Mammary epithelial cell (primary cell): ENCODE measurements at regions of chr5 and their contacts with region 1.

Region 1: GRCh38 chr5:132490486-132491367 is at the start of gene IRF1:
- DNase-seq: peak; percentile 98
- H3K4me3 ChIP-seq: peak within 1 kb of the TSS; percentile 81 to 96 (median 86)
- H3K27ac ChIP-seq: peak within 1 kb of the TSS; percentile 86
- H3K4me1 ChIP-seq: peaks cover 28% of the 10 kb centered on the region
- H3K27me3 ChIP-seq: no peaks in the 10 kb centered on the region
- CTCF ChIP-seq: peak in 1 of 2 donors; percentile 20
- total RNA-seq, gene IRF1: 5.3 to 14.9 TPM

Region 2: DNA sequence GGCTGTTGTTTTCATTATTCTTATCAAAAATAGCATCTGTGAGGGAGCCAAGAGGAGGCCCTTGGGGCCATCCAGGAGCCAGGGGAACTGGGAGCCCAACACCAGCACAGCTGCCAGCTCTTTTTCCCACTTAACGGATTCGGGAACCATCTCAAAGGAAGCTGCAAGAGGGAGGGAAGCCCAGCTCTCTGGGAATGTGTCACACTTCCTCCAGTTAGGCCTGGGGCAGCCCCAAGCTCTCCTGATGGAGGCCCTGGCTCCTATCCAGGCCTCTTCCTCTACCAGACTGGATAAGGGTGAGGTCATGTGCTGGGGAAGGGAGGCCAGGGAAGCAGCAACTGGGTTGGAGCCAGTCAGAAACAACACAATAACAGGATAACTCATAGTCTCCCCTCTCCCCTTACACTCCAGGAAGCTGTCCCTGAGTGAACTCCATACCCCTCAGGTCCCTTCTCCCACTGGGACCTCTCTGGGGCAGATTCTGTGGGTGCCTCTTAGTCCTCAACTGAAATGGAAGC is 404.4 kb before region 1 on chr5:
- CTCF ChIA-PET with region 1: no interaction called
- dilution Hi-C with region 1: loop called (anchors 25 kb)
- in situ Hi-C with region 1: no loop called
- intact Hi-C with region 1: no loop called
- DNase-seq: peak; percentile 94
- H3K4me3 ChIP-seq: no peak overlapping the region
- H3K27ac ChIP-seq: peak overlapping the region; percentile 39
- H3K4me1 ChIP-seq: peaks cover 46% of the 10 kb centered on the region
- H3K27me3 ChIP-seq: no peaks in the 10 kb centered on the region
- CTCF ChIP-seq: no peak

Region 3: DNA sequence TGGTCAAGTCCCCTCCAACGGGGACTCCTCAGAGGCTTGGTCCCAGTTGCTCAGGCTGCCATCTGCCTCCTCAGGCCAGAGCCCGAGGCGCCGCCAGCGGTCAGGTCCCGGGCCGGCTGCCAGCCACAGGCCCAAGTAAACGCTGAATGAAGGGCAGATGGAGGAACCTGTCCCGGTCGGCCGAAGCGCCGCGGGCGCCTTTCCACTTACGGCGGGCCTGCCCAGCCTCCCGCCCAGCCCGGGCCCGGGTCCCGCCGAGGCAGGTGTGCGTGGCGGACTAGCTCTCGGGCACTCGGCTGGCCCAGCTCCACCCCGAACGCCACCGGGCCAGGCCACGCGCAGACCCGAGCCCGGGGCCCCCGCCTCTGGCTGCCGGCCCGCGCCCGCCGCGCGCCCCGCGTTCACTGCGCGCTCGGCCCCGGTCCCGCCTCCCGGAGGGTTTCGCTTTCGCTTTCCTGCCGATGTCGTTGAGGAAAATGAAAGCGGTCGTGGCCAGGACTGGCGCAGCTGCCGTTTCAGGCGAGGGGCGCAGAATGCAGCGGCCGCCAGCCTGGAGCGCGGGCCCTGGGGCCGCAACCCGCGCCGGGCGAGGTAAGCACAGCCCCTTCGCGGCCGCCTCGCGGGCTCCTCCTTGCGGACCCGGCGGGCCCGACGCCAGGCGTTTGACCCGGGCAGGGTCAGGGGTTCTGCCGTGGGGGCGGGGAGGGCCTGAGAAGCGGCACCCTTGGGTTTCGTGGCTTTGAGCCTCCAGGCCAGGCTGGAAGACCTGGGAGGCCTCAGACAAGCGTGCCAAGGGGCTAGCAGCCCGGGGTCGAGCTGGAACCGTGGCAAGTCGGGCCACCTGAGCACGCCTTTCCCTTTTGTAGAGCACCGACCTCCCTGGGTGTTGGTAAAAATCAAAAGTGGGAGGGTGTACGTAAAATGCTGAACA is 80.0 kb before region 1 on chr5:
- CTCF ChIA-PET with region 1: no interaction called
- dilution Hi-C with region 1: no loop called
- in situ Hi-C with region 1: loop called in 1 of 2 experiments (anchors 10 kb)
- intact Hi-C with region 1: no loop called
- DNase-seq: no peak
- H3K4me3 ChIP-seq: peak overlapping the region; percentile 47 to 73 (median 68)
- H3K27ac ChIP-seq: peak overlapping the region; percentile 41
- H3K4me1 ChIP-seq: peaks cover 24% of the 10 kb centered on the region
- H3K27me3 ChIP-seq: no peaks in the 10 kb centered on the region
- CTCF ChIP-seq: peak; percentile 26 to 76

Region 4: GRCh38 chr5:132419502-132420468 is 70.9 kb before region 1 on chr5:
- CTCF ChIA-PET with region 1: no interaction called
- dilution Hi-C with region 1: no loop called
- in situ Hi-C with region 1: loop called (anchors 5 to 10 kb)
- intact Hi-C with region 1: no loop called
- DNase-seq: peak; percentile 48
- H3K4me3 ChIP-seq: no peak overlapping the region
- H3K27ac ChIP-seq: no peak overlapping the region
- H3K4me1 ChIP-seq: peaks cover 51% of the 10 kb centered on the region
- H3K27me3 ChIP-seq: no peaks in the 10 kb centered on the region
- CTCF ChIP-seq: peak; percentile 45 to 82

Region 5: DNA sequence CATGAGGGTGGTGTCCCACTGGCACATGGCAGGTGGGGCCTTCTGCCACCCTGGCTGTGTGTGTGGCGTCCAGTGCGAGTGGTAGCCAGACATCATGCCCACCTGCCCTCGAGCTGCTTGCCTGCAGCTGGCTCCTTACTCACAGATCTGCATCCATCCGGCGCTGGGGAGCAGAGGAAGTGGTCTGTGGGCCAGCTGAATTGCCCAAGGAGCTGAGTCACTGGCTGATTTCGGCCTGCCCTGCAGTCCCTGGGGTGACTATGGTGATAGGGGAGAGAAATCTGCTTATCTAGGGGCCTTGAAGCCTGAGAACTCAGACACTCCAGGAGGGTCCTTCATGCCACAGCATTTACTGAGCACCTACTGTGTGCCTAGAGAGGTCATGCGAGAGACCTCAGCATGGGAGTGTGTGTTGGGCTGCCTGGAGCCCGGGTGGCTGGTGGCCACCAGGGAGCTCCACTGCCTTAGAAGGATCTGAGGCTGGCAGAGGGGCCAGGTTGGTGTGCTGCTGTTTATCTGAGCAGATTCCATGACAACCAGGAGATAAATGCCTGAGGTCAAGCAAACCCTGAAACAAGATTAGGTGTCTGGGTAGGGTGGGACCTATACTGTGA is 64.1 kb before region 1 on chr5:
- CTCF ChIA-PET with region 1: interaction called, 3 read pairs
- dilution Hi-C with region 1: no loop called
- in situ Hi-C with region 1: loop called in 1 of 2 experiments (anchors 5 kb)
- intact Hi-C with region 1: loop called (anchors 1 kb)
- DNase-seq: peak; percentile 95
- H3K4me3 ChIP-seq: no peak overlapping the region
- H3K27ac ChIP-seq: peak overlapping the region; percentile 92
- H3K4me1 ChIP-seq: peaks cover 63% of the 10 kb centered on the region
- H3K27me3 ChIP-seq: no peaks in the 10 kb centered on the region
- CTCF ChIP-seq: peak; percentile 27 to 44

Region 6: DNA sequence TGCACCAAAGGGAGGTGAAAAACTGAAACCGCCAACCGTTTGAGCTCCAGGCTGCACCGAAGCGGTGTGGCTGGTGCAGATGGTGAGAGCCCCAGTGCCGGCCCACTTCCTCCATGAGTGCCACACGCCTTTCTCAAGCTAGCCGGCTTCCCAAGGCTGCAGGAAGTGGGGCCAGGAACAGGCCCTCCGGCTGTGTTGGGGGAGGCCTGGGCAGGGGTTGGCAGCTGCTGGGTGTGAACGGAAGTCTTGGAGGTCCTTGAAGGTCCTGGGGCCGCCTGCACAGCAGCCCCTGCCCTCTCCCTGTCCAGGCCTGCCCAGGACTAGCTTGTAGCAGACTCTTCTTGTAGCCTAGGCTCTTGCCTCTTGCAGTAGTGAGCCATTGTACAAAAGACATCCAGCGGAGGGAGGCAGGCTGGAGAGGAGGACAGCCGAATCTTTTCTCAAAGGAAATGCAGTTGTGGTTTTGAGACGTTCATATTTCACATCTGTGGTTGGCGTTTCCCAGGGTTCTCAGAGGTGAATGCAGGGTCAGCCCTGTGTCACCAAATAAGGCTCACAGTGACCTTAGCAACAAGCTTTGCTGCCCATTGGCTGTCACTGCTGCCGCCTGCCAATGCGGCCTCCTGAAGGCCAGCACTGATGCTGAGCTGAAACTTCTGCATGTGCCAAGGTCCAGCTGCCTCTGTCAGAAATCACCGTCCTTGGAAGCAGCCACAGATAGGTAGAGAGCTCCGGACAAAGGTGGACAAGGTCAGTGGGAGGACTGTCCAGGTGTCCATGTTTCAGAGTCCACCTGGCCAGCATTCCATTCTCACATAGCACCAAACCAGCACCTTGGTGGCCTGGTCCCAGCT is 24.1 kb before region 1 on chr5:
- CTCF ChIA-PET with region 1: interaction called, 3 read pairs
- dilution Hi-C with region 1: no loop called
- in situ Hi-C with region 1: no loop called
- intact Hi-C with region 1: loop called (anchors 1 kb)
- DNase-seq: peak; percentile 78
- H3K4me3 ChIP-seq: no peak overlapping the region
- H3K27ac ChIP-seq: peak overlapping the region; percentile 19
- H3K4me1 ChIP-seq: peaks cover 42% of the 10 kb centered on the region
- H3K27me3 ChIP-seq: no peaks in the 10 kb centered on the region
- CTCF ChIP-seq: no peak